Vagina (tissue), 2 donors: ENCODE measurements at regions of chr10 and their contacts with region 1.

Region 1: GRCh38 chr10:85849315-85849714 is 517.3 kb downstream of the GRID1 start:
- DNase-seq: no peak
- H3K4me3 ChIP-seq: no peak overlapping the region
- H3K27ac ChIP-seq: no peak overlapping the region
- H3K4me1 ChIP-seq: no peaks in the 10 kb centered on the region
- H3K27me3 ChIP-seq: no peaks in the 10 kb centered on the region
- CTCF ChIP-seq: no peak
- POLR2A ChIP-seq: no peak

Region 2: DNA sequence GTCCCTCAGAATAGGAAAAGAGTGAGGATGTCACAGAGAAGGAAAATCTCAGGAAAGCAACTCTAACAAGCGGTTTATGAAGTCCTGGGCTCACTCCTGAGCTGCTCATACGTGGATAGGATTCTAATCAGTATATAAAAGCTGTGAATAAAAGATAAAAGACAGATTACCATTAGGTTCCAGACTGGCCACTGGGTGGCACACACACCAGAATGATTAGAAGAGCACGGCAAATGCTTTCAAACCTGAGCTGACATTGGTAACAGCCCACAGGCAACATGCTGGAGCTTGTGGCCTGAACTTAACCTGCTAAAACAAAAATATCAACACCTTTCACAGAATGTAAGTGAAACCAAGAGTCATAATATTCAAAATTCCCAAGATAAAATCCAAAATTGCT is 146.5 kb after region 1 on chr10:
- intact Hi-C with region 1: loop called (anchors 5 kb)
- DNase-seq: no peak
- H3K4me3 ChIP-seq: no peak overlapping the region
- H3K27ac ChIP-seq: no peak overlapping the region
- H3K4me1 ChIP-seq: no peaks in the 10 kb centered on the region
- H3K27me3 ChIP-seq: no peaks in the 10 kb centered on the region
- CTCF ChIP-seq: no peak
- POLR2A ChIP-seq: no peak